Right ventricle myocardium inferior (tissue), 1 donor: ENCODE measurements at regions of chr4 and their contacts with region 1.

Region 1: GRCh38 chr4:7042697-7043464 is at the start of gene TADA2B:
- DNase-seq: peak; percentile 99
- ATAC-seq: peak; percentile 97
- total RNA-seq, gene TADA2B: 33.3 TPM

Region 2: DNA sequence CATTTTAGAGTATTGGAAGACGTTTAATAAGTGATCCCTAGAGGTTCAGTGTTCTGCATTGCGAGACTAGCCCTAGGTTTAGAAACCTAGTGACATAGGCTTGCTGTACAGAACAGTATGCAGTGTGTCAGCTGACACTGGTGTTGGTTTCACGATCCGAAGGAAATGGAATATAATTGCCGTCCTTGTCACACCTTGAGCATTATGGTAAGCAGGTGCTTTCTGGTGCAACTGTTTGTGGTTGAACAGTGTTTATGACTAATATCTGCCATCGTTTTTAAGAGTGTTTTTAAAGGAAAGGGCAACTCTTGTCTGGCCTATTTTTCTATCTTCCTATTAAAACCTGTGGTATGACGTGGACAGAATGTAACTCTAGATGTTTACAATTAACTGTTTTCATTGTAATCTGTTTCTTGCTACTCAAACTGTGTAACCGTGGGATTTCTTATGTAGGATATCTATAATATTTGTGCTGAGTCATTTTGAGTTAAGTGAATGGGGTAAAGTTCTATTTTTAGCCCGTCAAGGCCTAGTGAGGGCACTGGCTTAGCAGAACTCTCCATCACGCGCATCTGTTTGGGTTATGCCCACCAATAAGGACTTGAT is 187.1 kb before region 1 on chr4:
- intact Hi-C with region 1: no loop called
- DNase-seq: no peak
- ATAC-seq: peak; percentile 76

Region 3: GRCh38 chr4:6917461-6918271 is 125.2 kb before region 1 on chr4:
- intact Hi-C with region 1: loop called (anchors 10 kb)
- DNase-seq: peak; percentile 91
- ATAC-seq: peak; percentile 67

Region 4: GRCh38 chr4:7108660-7109059 is 65.8 kb after region 1 on chr4:
- intact Hi-C with region 1: no loop called
- DNase-seq: peak; percentile 7
- ATAC-seq: no peak